Dorsolateral prefrontal cortex (tissue), 120 donors: ENCODE measurements at regions of chr15 and their contacts with region 1.

Region 1: GRCh38 chr15:91561371-91562100 is 292.0 kb upstream of the SLCO3A1 start:
- DNase-seq: no peak
- H3K4me3 ChIP-seq: peak overlapping the region in 4 of 59 donors; percentile 9 to 25 (median 15)
- H3K27ac ChIP-seq: peak overlapping the region in 58 of 59 donors; percentile 82 to 100 (median 97)
- H3K27me3 ChIP-seq: no peaks in the 10 kb centered on the region
- CTCF ChIP-seq: peak in 2 of 56 donors; percentile 15 to 16

Region 2: GRCh38 chr15:91482795-91483194 is 78.7 kb before region 1 on chr15:
- intact Hi-C with region 1: no loop called
- DNase-seq: no peak
- H3K4me3 ChIP-seq: no peak overlapping the region
- H3K27ac ChIP-seq: no peak overlapping the region
- H3K27me3 ChIP-seq: peaks cover 0 to 6% (median 0%) of the 10 kb centered on the region in 45 donors
- CTCF ChIP-seq: no peak

Region 3: GRCh38 chr15:91537856-91538255 is 23.7 kb before region 1 on chr15:
- intact Hi-C with region 1: loop called in 1 of 2 experiments (anchors 1 kb)
- DNase-seq: no peak
- H3K4me3 ChIP-seq: no peak overlapping the region
- H3K27ac ChIP-seq: peak overlapping the region; percentile 42 to 98 (median 89)
- H3K27me3 ChIP-seq: no peaks in the 10 kb centered on the region
- CTCF ChIP-seq: no peak